ENCODE measurements at regions of chr9 and their contacts with region 1.

Region 1: GRCh38 chr9:15552636-15553527 is at the start of gene CCDC171:
- DNase-seq: peak; percentile 91
- ATAC-seq: peak; percentile 89
- H3K4me3 Mint-ChIP-seq: peak within 1 kb of the TSS; percentile 80
- H3K27ac Mint-ChIP-seq: peak within 1 kb of the TSS; percentile 87
- H3K4me1 Mint-ChIP-seq: peaks cover 16% of the 10 kb centered on the region
- H3K27me3 Mint-ChIP-seq: peaks cover 10% of the 10 kb centered on the region
- total RNA-seq, gene CCDC171: 2.5 to 2.9 TPM

Region 2: DNA sequence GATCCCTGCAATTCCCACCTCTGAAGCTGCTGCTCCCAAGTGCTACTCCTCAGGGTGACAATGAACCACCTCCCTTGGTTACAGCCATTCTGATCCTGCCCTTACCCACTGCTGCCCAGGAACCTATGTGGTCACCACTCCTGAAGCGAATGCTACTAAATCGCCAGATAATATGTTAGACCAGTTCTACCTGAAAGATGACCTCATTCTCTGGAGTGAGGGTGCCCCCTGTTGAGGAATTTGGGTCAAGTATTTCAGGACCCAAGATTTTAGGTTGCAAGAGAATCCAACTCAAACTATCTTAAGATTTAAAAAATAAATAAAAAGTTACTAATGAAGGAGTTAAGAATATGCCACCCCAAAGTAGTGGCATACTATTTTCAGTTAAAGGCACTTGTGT is 136.0 kb before region 1 on chr9:
- CTCF ChIA-PET with region 1: no interaction called
- DNase-seq: peak; percentile 54
- ATAC-seq: peak; percentile 55
- H3K4me3 Mint-ChIP-seq: no peak overlapping the region
- H3K27ac Mint-ChIP-seq: no peak overlapping the region
- H3K4me1 Mint-ChIP-seq: peaks cover 2% of the 10 kb centered on the region
- H3K27me3 Mint-ChIP-seq: peaks cover 7% of the 10 kb centered on the region

Region 3: GRCh38 chr9:15510789-15511575 is 41.9 kb before region 1 on chr9 and contains the start of gene PSIP1:
- CTCF ChIA-PET with region 1: interaction called, 21 read pairs
- DNase-seq: peak; percentile 94
- ATAC-seq: peak; percentile 85
- H3K4me3 Mint-ChIP-seq: peak within 1 kb of the TSS; percentile 91
- H3K27ac Mint-ChIP-seq: peak within 1 kb of the TSS; percentile 98
- H3K4me1 Mint-ChIP-seq: peaks cover 48% of the 10 kb centered on the region
- H3K27me3 Mint-ChIP-seq: no peaks in the 10 kb centered on the region
- total RNA-seq, gene PSIP1: 92.6 to 126 TPM

Region 4: DNA sequence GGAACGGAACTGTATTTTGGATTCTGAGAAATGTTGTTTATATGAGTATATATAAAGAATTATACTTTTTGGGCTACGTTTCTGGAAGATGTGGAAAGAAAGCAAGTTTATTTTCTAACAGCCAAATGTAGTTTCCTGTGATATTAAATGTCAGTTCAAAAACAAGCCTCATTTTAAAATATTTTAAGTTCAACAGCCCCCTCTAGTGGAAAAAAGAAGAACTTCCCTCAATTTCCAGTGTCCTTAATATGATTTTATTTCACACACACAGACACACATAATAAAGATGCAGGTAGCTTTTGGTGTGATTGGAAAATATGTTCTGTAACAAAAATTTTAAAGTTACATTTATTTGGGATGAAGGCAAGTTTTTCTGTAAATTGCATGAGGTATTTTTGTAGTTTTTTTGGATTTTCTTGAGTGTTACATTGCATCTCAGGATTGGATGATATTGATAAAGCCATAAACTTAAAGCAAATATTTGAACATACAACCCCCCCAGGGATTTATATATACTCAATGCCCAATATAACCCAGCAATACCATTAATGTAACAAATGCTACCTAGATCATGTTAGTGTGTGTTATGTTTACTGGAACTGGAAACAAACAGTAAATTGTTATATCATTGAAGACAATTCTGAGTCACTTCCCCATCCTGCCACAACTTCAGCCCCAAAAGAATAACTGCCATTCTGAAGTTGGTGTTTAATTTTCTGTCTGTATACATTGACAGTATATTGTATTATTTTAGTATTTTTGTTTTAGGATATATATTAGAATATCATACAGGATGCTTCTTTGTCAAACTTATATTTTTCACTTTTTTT is 54.0 kb after region 1 on chr9:
- CTCF ChIA-PET with region 1: interaction called, 22 read pairs
- DNase-seq: no peak
- ATAC-seq: peak; percentile 83
- H3K4me3 Mint-ChIP-seq: no peak overlapping the region
- H3K27ac Mint-ChIP-seq: peak overlapping the region; percentile 68
- H3K4me1 Mint-ChIP-seq: peaks cover 18% of the 10 kb centered on the region
- H3K27me3 Mint-ChIP-seq: no peaks in the 10 kb centered on the region